Heart right ventricle (tissue), 16 donors: ENCODE measurements at regions of chr12 and their contacts with region 1.

Region 1: DNA sequence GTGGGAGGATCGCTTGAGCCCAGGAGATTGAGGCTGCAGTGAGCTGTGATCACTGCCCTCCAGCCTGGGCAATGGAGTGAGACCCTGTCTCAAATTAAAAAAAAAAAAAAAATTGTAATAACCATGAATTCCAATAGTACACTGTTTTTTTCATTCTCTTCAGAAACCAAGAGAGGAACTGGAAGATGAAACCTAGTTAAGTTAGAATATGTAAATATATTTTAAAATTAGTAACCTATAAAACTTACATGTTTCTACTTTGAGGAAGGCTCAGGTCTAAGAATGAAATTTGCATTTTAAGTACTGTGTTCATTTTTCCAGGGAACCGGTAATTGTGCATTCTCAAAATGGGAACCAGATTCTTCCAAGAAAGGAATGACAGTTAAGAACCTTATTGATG is 18.8 kb downstream of the KNTC1 start:
- DNase-seq: no peak
- ATAC-seq: no peak
- H3K4me3 ChIP-seq: no peak overlapping the region
- H3K27ac ChIP-seq: no peak overlapping the region
- H3K4me1 ChIP-seq: no peaks in the 10 kb centered on the region
- H3K27me3 ChIP-seq: no peaks in the 10 kb centered on the region
- CTCF ChIP-seq: no peak

Region 2: DNA sequence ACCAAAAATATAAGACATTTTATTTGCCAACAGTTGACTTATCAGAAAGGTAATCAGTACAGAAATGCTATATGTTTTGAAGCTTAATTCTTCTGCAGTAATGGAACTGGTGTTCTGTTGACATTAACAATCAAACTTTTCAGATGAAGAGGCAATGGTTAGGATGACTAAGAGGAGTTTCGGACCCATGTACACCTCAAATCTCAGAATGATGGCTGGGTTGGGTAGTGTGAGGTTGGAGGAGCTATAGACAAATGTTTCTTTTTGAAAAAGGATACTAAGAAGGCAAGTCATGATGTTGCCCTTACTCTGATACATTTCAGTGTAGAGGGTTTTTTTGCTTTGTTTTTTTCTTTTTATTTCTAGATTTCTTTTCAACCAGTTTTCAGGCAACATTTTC is 48.1 kb after region 1 on chr12:
- intact Hi-C with region 1: loop called in 1 of 10 experiments (anchors 1 kb)
- DNase-seq: no peak
- ATAC-seq: no peak
- H3K4me3 ChIP-seq: no peak overlapping the region
- H3K27ac ChIP-seq: no peak overlapping the region
- H3K4me1 ChIP-seq: no peaks in the 10 kb centered on the region
- H3K27me3 ChIP-seq: no peaks in the 10 kb centered on the region
- CTCF ChIP-seq: no peak